Panc1 (cell line): ENCODE measurements at regions of chr1 and their contacts with region 1.

Region 1: DNA sequence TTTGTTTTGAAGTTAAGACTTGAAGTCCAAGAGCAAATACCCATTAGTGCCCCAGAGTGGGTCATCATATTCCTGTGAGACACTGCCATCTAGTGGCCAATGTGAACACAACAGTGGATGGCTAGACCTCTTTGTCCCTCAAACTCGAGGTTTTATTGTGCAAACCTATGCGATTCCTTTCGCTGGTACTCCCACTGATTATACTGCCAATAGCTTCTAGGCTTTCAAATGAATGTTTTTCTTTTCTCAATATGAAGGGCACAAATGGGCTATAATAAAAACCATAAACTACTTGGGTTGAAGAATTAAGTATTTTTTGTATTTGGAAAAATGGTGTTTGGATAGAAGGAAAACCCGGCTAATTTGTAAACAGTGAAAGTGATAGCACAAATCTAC is 100.4 kb upstream of the ZNF281 start:
- DNase-seq: peak; percentile 82
- ATAC-seq: peak; percentile 94
- H3K4me3 ChIP-seq: no peak overlapping the region
- H3K27ac ChIP-seq: no peak overlapping the region
- H3K4me1 ChIP-seq: peaks cover 9% of the 10 kb centered on the region; the same call in 1 of the 2 replicates
- H3K27me3 ChIP-seq: peaks cover 3% of the 10 kb centered on the region; the same call in 1 of the 2 replicates
- CTCF ChIP-seq: peak; percentile 88

Region 2: GRCh38 chr1:200139661-200140250 is 370.5 kb before region 1 on chr1:
- CTCF ChIA-PET with region 1: no interaction called
- POLR2A ChIA-PET with region 1: no interaction called
- in situ Hi-C with region 1: no loop called
- intact Hi-C with region 1: loop called (anchors 5 kb)
- DNase-seq: peak; percentile 50
- ATAC-seq: peak; percentile 97
- H3K4me3 ChIP-seq: no peak overlapping the region
- H3K27ac ChIP-seq: no peak overlapping the region
- H3K4me1 ChIP-seq: no peaks in the 10 kb centered on the region
- H3K27me3 ChIP-seq: no peaks in the 10 kb centered on the region
- CTCF ChIP-seq: peak; percentile 84

Region 3: DNA sequence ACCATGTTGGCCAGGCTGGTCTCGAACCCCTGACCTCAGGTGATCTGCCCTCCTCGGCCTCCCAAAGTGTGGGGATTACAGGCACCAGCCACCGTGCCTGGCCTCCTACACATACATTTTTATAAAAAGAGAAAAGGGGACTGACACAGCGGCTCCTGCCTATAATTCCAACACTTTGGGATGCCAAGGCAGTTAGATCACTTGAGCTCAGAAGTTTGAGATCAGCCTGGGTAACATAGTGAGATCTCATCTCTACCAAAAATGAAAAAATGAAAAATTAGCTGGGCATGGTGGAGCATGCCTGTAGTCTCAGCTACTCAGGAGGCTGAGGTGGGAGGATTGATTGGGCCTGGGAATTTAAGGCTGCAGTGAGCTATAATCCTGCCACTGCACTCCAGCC is 123.8 kb before region 1 on chr1:
- CTCF ChIA-PET with region 1: interaction called, 20 read pairs
- POLR2A ChIA-PET with region 1: no interaction called
- in situ Hi-C with region 1: no loop called
- intact Hi-C with region 1: no loop called
- DNase-seq: no peak
- ATAC-seq: no peak
- H3K4me3 ChIP-seq: no peak overlapping the region
- H3K27ac ChIP-seq: 0 out of 2 replicates have a peak overlapping the region, but pooled peaks have one; percentile 6
- H3K4me1 ChIP-seq: peaks cover 20% of the 10 kb centered on the region
- H3K27me3 ChIP-seq: no peaks in the 10 kb centered on the region
- CTCF ChIP-seq: no peak

Region 4: GRCh38 chr1:200802865-200803512 is 292.8 kb after region 1 on chr1:
- CTCF ChIA-PET with region 1: no interaction called
- POLR2A ChIA-PET with region 1: no interaction called
- in situ Hi-C with region 1: no loop called
- intact Hi-C with region 1: no loop called
- DNase-seq: peak; percentile 71
- ATAC-seq: peak; percentile 93
- H3K4me3 ChIP-seq: no peak overlapping the region
- H3K27ac ChIP-seq: no peak overlapping the region
- H3K4me1 ChIP-seq: no peaks in the 10 kb centered on the region
- H3K27me3 ChIP-seq: no peaks in the 10 kb centered on the region
- CTCF ChIP-seq: peak; percentile 91